Right cardiac atrium (tissue), 5 donors: ENCODE measurements at regions of chr4 and their contacts with region 1.

Region 1: DNA sequence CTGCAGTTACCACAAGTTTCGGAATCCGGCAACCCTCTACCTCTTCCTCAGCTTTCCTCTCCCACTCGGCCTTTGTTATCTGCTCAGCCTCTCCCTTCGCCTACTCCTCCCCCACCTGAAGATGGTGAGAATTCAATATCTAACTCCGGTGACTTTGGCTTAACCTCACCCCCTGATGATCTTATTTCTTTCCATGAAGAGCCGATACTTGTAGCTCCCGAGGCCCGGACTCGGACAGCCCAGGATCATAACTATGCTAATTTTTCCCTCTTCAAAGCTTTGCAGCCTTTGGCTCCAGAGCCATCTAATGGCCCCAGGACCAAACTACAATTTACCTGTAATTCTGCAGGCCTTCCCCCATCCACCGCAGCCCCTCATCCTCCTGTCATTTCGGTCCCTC is 32.0 kb upstream of the MGST2 start:
- DNase-seq: peak; percentile 39 to 69 (median 49)
- ATAC-seq: peak; percentile 93 to 94
- H3K4me3 ChIP-seq: peak overlapping the region; percentile 34
- H3K27ac ChIP-seq: no peak overlapping the region
- H3K4me1 ChIP-seq: no peaks in the 10 kb centered on the region
- H3K27me3 ChIP-seq: no peaks in the 10 kb centered on the region

Region 2: DNA sequence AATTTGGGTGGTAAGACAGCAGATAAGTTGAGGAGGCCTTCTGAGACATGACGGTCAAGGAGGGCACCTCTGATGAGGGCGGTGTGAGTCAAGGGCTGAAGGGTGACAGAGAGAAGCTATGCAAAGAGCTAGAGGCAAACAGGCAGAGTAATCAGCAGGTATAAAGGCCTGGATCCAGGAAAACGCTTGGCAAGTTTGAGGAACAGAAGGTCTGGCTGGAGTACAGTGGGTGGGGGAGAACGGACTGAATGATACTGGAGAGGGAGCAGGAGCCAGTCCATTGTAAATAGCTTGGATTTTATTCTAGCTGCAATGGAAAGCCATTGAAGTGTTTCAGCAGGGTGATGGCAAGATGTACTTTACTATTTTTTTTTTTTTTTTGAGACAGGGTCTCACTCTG is 140.5 kb before region 1 on chr4:
- intact Hi-C with region 1: loop called in 2 of 4 experiments (anchors 5 to 10 kb)
- DNase-seq: no peak
- ATAC-seq: no peak
- H3K4me3 ChIP-seq: no peak overlapping the region
- H3K27ac ChIP-seq: no peak overlapping the region
- H3K4me1 ChIP-seq: no peaks in the 10 kb centered on the region
- H3K27me3 ChIP-seq: no peaks in the 10 kb centered on the region

Region 3: DNA sequence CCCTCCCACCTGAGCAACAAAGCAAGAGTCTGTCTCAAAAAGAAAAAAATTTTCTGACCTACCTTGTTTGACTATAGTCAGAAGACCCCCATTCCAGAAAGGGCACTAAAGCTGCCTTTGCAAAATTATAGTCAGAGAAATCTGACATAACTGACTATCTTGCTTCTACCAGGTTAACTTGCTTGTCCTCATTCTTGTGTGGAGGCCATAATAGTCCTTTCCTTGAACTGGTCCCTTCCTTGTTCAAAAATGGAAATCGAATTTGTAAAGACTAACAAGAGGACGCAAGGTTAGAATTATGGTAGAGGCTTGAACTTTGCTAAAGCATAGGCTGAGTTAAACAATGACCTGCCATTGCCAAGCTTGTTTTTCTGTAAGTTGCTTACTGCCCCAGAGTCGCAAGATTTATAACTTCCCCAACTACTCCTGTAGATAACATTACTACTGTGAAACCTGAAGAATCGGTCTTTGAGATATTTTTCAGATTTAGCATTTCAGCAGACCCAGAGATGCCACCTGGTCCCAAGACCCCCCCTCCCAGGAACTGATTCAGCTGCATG is 134.6 kb before region 1 on chr4:
- intact Hi-C with region 1: loop called in 2 of 4 experiments (anchors 5 to 10 kb)
- DNase-seq: no peak
- ATAC-seq: no peak
- H3K4me3 ChIP-seq: no peak overlapping the region
- H3K27ac ChIP-seq: no peak overlapping the region
- H3K4me1 ChIP-seq: no peaks in the 10 kb centered on the region
- H3K27me3 ChIP-seq: no peaks in the 10 kb centered on the region